PC-9 (cell line): ENCODE measurements at regions of chr12 and their contacts with region 1.

Region 1: DNA sequence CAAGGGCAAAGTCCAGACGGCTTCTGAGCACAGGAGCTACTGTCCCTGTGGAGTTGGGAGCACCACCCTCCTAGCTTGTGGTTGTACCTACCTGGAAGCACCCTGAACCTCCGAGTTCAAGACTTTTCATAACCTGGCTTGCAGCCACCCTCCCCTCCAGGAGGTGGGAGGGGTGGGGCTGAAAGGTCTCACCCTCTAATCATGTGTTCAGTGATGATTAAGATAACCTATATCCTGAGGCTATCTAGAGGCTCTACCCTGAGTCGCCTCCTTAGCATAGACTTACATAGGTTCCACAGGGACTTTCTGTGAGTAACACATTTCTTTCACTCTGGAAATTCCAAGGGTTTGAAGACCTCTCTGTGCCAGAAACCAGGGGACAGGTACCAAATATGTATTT is 146.5 kb downstream of the CFAP54 start:
- DNase-seq: no peak
- H3K4me3 ChIP-seq: no peak overlapping the region
- H3K27ac ChIP-seq: no peak overlapping the region
- H3K4me1 ChIP-seq: no peaks in the 10 kb centered on the region
- H3K27me3 ChIP-seq: no peaks in the 10 kb centered on the region
- CTCF ChIP-seq: no peak

Region 2: GRCh38 chr12:96587691-96588090 is 48.1 kb before region 1 on chr12:
- CTCF ChIA-PET with region 1: no interaction called
- POLR2A ChIA-PET with region 1: no interaction called
- intact Hi-C with region 1: no loop called
- DNase-seq: no peak
- H3K4me3 ChIP-seq: no peak overlapping the region
- H3K27ac ChIP-seq: no peak overlapping the region
- H3K4me1 ChIP-seq: no peaks in the 10 kb centered on the region
- H3K27me3 ChIP-seq: no peaks in the 10 kb centered on the region
- CTCF ChIP-seq: no peak

Region 3: GRCh38 chr12:97003276-97003675 is 367.4 kb after region 1 on chr12:
- CTCF ChIA-PET with region 1: interaction called, 11 read pairs
- POLR2A ChIA-PET with region 1: no interaction called
- intact Hi-C with region 1: no loop called
- DNase-seq: no peak
- H3K4me3 ChIP-seq: no peak overlapping the region
- H3K27ac ChIP-seq: no peak overlapping the region
- H3K4me1 ChIP-seq: no peaks in the 10 kb centered on the region
- H3K27me3 ChIP-seq: peaks cover 35% of the 10 kb centered on the region
- CTCF ChIP-seq: no peak